Posterior vena cava (tissue), 2 donors: ENCODE measurements at regions of chr3 and their contacts with region 1.

Region 1: GRCh38 chr3:55485211-55485791 is 1.8 kb downstream of the WNT5A start:
- DNase-seq: peak; percentile 93

Region 2: GRCh38 chr3:54853573-54854404 is 631.5 kb before region 1 on chr3:
- intact Hi-C with region 1: loop called in 1 of 2 experiments (anchors 10 kb)
- DNase-seq: peak; percentile 93

Region 3: DNA sequence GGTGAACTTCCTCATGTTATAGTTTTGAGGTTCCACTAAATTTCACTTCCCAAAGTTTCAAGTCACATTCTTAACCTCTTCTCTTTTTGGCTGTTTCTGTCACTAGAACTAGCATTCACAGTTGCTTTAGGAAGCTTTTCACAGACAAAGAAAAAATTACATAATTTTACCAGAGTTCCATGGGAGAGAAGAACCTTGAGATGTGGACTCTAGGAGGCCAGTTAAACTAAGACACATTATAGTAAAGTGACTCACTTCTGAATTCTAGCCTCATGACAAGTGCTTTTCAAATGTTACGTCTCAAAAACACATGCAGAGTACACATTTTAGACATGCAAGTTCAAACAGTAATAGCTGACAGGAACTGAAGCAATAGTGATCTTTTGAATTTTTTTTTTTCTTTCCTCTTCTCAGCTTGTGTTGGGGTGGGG is 517.6 kb before region 1 on chr3:
- intact Hi-C with region 1: no loop called
- DNase-seq: no peak

Region 4: GRCh38 chr3:55735976-55736375 is 250.7 kb after region 1 on chr3:
- intact Hi-C with region 1: loop called (anchors 10 kb)
- DNase-seq: no peak

Region 5: GRCh38 chr3:55746808-55747413 is 261.6 kb after region 1 on chr3:
- intact Hi-C with region 1: loop called in 1 of 2 experiments (anchors 10 kb)
- DNase-seq: no peak

Region 6: GRCh38 chr3:56251343-56251945 is 766.1 kb after region 1 on chr3:
- intact Hi-C with region 1: loop called in 1 of 2 experiments (anchors 2 kb)
- DNase-seq: no peak